ENCODE measurements at regions of chr21 and their contacts with region 1.

Region 1: GRCh38 chr21:37862536-37862935 is 53.7 kb downstream of the KCNJ6 start:
- DNase-seq: peak; percentile 52 to 80 (median 69)
- H3K4me3 ChIP-seq: peak overlapping the region in 1 of 3 experiments; percentile 11
- H3K4me3 Mint-ChIP-seq: peak overlapping the region in 1 of 2 donors; percentile 80
- H3K27ac ChIP-seq: peak overlapping the region; percentile 6 to 55
- H3K27ac Mint-ChIP-seq: peak overlapping the region; percentile 84 to 98 (median 88)
- H3K4me1 ChIP-seq: peaks cover 47 to 50% of the 10 kb centered on the region in 2 donors
- H3K4me1 Mint-ChIP-seq: peaks cover 42% of the 10 kb centered on the region
- H3K27me3 ChIP-seq: no peaks in the 10 kb centered on the region
- H3K27me3 Mint-ChIP-seq: peaks cover 0 to 6% (median 0%) of the 10 kb centered on the region in 3 donors
- CTCF ChIP-seq: no peak

Region 2: GRCh38 chr21:37829447-37829846 is 33.1 kb before region 1 on chr21:
- intact Hi-C with region 1: loop called (anchors 5 kb)
- DNase-seq: peak; percentile 80 to 88 (median 84)
- H3K4me3 ChIP-seq: no peak overlapping the region
- H3K4me3 Mint-ChIP-seq: peak overlapping the region in 1 of 2 donors; percentile 36
- H3K27ac ChIP-seq: peak overlapping the region; percentile 62 to 71
- H3K27ac Mint-ChIP-seq: peak overlapping the region; percentile 69 to 92 (median 87)
- H3K4me1 ChIP-seq: peaks cover 24 to 28% of the 10 kb centered on the region in 2 donors
- H3K4me1 Mint-ChIP-seq: peaks cover 31% of the 10 kb centered on the region
- H3K27me3 ChIP-seq: no peaks in the 10 kb centered on the region
- H3K27me3 Mint-ChIP-seq: peaks cover 0 to 4% (median 1%) of the 10 kb centered on the region in 3 donors
- CTCF ChIP-seq: no peak

Region 3: GRCh38 chr21:37916310-37917051 is 53.9 kb after region 1 on chr21 and contains the start of gene KCNJ6:
- intact Hi-C with region 1: no loop called
- DNase-seq: peak; percentile 7 to 29 (median 16)
- H3K4me3 ChIP-seq: no peak within 1 kb of the TSS
- H3K4me3 Mint-ChIP-seq: peak within 1 kb of the TSS in 1 of 2 donors; percentile 86
- H3K27ac ChIP-seq: no peak within 1 kb of the TSS
- H3K27ac Mint-ChIP-seq: no peak within 1 kb of the TSS
- H3K4me1 ChIP-seq: peaks cover 0 to 2% of the 10 kb centered on the region in 2 donors
- H3K4me1 Mint-ChIP-seq: peaks cover 6% of the 10 kb centered on the region
- H3K27me3 ChIP-seq: peaks cover 67 to 74% of the 10 kb centered on the region in 2 donors
- H3K27me3 Mint-ChIP-seq: peaks cover 52 to 77% (median 69%) of the 10 kb centered on the region in 3 donors
- CTCF ChIP-seq: peak; percentile 70
- polyA plus RNA-seq, gene KCNJ6: not detected

Region 4: GRCh38 chr21:38219049-38219628 is 356.6 kb after region 1 on chr21:
- intact Hi-C with region 1: loop called in 1 of 2 experiments (anchors 5 kb)
- DNase-seq: peak; percentile 83 to 88 (median 87)
- H3K4me3 ChIP-seq: no peak overlapping the region
- H3K4me3 Mint-ChIP-seq: peak overlapping the region in 1 of 2 donors; percentile 27
- H3K27ac ChIP-seq: peak overlapping the region in 1 of 2 donors; percentile 92
- H3K27ac Mint-ChIP-seq: peak overlapping the region; percentile 87 to 95 (median 90)
- H3K4me1 ChIP-seq: peaks cover 25 to 34% of the 10 kb centered on the region in 2 donors
- H3K4me1 Mint-ChIP-seq: peaks cover 27% of the 10 kb centered on the region
- H3K27me3 ChIP-seq: no peaks in the 10 kb centered on the region
- H3K27me3 Mint-ChIP-seq: peaks cover 0 to 4% (median 3%) of the 10 kb centered on the region in 3 donors
- CTCF ChIP-seq: peak; percentile 97

Measured in CD14-positive monocyte (primary cell).